HEK293 (cell line): ENCODE measurements at regions of chr7 and their contacts with region 1.

Region 1: DNA sequence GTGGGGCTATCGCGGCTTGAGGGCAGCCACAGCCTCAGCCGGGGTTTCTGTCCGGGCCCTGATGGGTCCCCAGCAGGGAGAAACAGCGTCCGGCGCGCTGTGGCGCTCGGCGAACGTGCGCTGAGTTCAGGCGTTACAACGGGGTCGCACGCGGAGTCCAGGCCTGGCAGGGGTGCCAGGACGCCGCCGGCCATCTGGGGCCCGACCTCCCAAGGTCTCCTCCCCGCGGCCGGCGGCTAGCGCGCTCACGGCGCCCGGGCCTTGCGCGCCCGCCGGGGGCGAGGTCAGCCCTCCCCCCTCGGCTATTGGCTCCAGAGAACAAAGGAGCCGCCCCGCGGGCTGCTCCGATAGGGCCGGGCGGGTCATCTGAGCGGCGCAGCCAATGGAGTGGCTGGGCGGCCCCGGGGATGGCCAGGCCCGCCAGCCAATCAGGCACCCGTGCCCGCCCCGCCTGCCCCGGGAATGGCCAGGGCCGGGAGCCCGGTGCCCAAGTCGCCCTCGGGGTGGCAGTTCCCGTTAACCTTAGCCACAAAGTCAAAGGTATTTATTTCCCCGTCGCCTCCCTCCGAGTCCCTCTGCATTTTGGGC is at the start of gene ZNF775:
- H3K4me3 ChIP-seq: peak within 1 kb of the TSS; percentile 80
- H3K27ac ChIP-seq: peak within 1 kb of the TSS; percentile 62; the same call in 1 of the 2 replicates
- H3K4me1 ChIP-seq: peaks cover 3% of the 10 kb centered on the region; the same call in 1 of the 2 replicates
- CTCF ChIP-seq: no peak

Region 2: DNA sequence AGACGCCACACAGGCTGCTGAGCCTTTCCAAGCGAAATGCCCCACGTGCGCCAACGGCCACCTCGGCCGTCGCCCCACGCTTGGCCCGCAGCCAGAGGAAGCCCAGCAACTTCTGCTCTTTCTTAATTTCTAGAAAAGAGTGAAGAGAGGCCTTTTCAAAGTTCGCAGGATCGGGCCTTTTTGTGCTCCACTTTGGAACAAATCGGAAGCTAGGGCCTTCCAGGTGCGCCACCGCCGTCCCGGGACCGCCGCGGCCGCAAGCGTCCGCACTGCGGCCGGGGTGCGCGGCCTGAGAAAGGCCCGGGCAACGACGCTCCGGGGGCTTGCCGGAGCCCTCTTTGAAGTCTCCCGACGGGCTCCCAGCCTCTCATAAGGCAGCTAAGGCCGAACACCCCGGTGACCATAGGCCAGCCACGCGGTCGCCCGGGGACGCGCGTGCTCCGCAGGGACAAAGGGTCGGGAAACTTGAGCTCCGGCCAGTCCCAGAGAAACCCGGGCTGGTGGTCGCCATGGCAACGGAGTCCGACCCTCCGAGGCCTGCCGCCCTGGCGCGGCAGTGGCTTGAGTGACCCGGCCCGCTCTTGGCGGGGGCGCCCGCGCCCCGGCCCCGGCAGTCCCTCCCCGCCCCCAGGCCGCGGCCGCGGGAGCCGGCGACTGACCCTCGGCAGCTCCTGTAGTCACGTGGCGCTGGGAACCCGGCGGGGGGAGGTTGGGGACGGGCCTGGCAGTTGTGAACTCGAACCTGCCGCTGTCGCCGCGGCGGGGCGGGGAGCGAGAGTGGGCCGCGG is 10.7 kb before region 1 on chr7 and contains the start of gene REPIN1:
- CTCF ChIA-PET with region 1: no interaction called
- POLR2A ChIA-PET with region 1: interaction called, 18 read pairs
- H3K4me3 ChIP-seq: peak within 1 kb of the TSS; percentile 89
- H3K27ac ChIP-seq: peak within 1 kb of the TSS; percentile 74
- H3K4me1 ChIP-seq: no peaks in the 10 kb centered on the region
- CTCF ChIP-seq: peak; percentile 45; the same call in 1 of the 2 replicates

Region 3: DNA sequence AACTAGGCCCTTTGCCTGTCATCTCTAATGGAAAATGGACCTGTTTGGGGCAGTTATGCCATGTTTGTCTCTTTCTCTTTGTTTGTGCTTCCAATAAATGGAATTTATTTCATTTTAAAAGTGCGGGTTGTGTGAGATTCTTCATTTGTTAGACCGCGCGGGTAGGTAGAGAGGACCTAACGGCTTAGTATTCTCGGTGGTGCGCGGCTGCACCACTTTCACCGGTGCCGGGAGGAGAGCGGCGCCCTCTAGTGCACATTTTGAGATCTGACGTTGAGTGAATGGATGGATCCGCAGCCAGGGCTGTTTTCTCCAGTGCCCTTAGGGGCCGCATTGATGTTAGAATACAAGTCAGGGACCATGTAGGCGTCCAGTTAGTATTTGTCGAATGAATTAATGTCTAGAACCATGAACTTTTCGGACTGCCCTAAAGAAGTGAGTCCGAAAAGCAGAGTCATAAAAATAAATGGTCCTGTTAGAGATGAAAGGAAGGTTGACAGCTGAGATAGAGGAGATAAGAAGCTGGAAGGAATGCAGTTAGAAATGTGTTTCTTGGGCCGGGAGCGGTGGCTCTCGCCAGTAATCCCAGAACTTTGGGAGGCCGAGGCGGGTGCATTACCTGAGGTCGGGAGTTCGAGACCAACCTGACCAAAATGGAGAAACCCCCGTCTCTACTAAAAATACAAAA is 42.2 kb after region 1 on chr7:
- CTCF ChIA-PET with region 1: no interaction called
- POLR2A ChIA-PET with region 1: no interaction called
- H3K4me3 ChIP-seq: no peak overlapping the region
- H3K27ac ChIP-seq: no peak overlapping the region
- H3K4me1 ChIP-seq: no peaks in the 10 kb centered on the region
- CTCF ChIP-seq: peak; percentile 91